Activated T-helper 1 cell treated with anti-CD3 and anti-CD28 coated beads, Interleukin-12 subunit alpha, Interleukin-12 subunit beta, Interleukin-2, Interleukin-4 antibody, amounts not matched to agents 30 ng/mL and 10 ng/mL and 1 ng/mL, durations not matched to agents 14 hours and 24 hours and 36 hours (primary cell): ENCODE measurements at regions of chr1 and their contacts with region 1.

Region 1: DNA sequence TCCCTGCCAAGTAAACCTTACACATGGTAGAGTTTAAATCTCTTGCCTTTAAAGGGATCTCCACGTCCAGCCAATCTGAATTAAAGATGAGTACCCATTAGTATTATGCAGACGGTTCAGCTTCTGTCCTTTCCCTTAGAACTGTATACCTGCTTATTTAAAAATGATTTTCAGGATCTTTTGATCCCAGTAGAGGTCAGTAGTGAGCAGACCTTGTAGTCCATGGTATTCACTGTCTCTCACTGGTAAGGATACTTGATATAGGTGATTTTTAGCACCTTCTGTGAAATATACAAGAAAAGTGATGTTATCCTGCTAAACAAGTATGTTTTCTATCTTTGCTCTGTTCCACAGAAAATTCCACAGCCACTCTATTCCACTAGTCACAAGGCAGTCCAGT is 1211.6 kb upstream of the ADGRL4 start:
- DNase-seq: no peak
- H3K4me3 Mint-ChIP-seq: no peak overlapping the region
- H3K27ac Mint-ChIP-seq: no peak overlapping the region
- H3K4me1 Mint-ChIP-seq: no peaks in the 10 kb centered on the region
- H3K27me3 Mint-ChIP-seq: no peaks in the 10 kb centered on the region

Region 2: DNA sequence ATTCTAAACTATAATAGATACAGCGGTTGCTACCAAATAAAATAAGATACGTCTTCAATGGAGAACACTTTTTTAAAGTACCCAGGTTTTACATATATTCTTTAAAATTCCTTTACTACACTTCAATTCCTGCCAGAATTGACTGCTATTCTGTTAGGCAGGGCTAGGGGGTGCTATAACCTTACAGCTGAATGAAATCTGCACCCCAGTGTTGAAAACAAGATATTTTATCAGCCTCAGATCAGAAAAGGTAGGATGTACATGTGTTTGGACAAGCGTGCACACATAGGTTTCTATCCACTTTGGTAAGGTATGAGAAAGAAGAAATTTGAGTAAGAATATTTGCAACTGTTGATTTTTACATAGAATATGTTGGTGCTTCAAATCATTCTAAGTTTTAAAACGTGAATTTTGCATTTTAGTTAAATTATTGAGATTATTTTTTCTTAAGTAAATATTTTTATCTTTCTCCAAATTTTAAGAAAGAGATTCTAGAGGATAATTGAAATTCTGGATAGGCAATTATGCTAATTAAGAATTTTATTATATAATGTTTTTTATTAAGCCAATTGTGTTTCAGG is 720.8 kb before region 1 on chr1:
- intact Hi-C with region 1: loop called (anchors 5 kb)
- DNase-seq: no peak
- H3K4me3 Mint-ChIP-seq: no peak overlapping the region
- H3K27ac Mint-ChIP-seq: no peak overlapping the region
- H3K4me1 Mint-ChIP-seq: no peaks in the 10 kb centered on the region
- H3K27me3 Mint-ChIP-seq: no peaks in the 10 kb centered on the region

Region 3: DNA sequence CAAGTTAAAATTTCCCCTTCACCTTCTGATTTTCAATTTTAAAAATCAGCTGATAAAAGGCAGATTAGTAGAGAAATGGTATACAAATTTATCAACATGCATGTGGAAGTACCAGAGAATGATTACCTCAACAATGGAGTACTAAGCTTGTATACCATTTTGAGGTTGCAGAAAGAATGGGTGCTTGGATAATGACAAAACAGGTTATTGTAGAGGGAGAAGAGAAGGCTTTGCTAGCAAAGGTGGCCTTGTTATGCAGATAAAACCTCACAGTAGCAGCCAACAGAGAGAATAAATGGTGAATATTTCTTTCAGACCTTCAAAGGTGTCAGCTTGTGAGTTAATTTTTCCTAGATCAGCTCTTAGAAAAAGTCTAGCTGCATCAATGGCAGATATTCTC is 36.7 kb before region 1 on chr1:
- intact Hi-C with region 1: no loop called
- DNase-seq: no peak
- H3K4me3 Mint-ChIP-seq: no peak overlapping the region
- H3K27ac Mint-ChIP-seq: no peak overlapping the region
- H3K4me1 Mint-ChIP-seq: no peaks in the 10 kb centered on the region
- H3K27me3 Mint-ChIP-seq: no peaks in the 10 kb centered on the region

Region 4: DNA sequence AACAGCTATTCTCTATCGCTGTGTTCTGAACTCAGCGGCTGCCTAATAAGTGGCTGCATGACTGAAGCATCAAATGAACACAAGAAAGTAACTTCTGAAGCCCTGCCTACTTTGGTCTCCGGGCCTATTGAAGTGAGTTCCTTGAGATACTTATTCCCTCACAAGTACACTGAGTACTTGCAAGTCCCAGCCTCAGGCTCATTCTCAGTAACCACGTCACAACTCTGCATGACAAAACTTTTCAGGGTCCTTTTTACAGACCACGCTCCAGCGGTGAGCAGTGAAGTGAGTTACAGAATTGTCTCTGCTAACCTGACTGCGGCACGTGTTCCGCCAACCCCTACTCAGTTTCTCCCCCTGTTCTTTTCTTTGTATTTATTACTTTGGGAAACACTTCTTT is 131.1 kb after region 1 on chr1:
- intact Hi-C with region 1: no loop called
- DNase-seq: no peak
- H3K4me3 Mint-ChIP-seq: no peak overlapping the region
- H3K27ac Mint-ChIP-seq: no peak overlapping the region
- H3K4me1 Mint-ChIP-seq: no peaks in the 10 kb centered on the region
- H3K27me3 Mint-ChIP-seq: no peaks in the 10 kb centered on the region